PC-3 (cell line): ENCODE measurements at regions of chr9 and their contacts with region 1.

Region 1: GRCh38 chr9:25350011-25350410 is 328.2 kb downstream of the TUSC1 start:
- DNase-seq: peak; percentile 31
- ATAC-seq: no peak
- H3K4me3 ChIP-seq: no peak overlapping the region
- H3K27ac ChIP-seq: no peak overlapping the region
- H3K4me1 ChIP-seq: no peaks in the 10 kb centered on the region
- H3K27me3 ChIP-seq: no peaks in the 10 kb centered on the region
- CTCF ChIP-seq: peak; percentile 56

Region 2: DNA sequence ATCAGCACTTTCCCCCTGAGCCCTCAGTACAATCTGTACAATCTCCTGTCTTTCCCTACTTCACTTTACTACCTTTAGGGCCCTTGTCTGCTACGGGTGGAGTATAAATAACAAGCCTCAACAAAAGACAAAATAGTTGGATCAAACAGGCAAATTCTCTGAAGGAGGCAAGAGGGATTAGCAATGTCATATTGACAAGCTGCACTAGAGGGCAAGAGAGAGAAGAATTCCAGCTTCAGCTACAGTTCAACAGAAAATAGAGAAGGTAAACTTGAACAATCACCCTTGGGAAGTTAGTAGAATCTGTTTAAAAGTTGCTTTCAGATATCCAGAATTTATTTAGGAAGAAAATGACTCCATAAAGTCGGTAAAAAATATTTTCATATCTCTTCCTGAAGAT is 735.9 kb before region 1 on chr9:
- CTCF ChIA-PET with region 1: no interaction called
- POLR2A ChIA-PET with region 1: no interaction called
- intact Hi-C with region 1: loop called (anchors 5 kb)
- DNase-seq: peak; percentile 6
- ATAC-seq: peak; percentile 50; the same call in 1 of the 2 replicates
- H3K4me3 ChIP-seq: no peak overlapping the region
- H3K27ac ChIP-seq: no peak overlapping the region
- H3K4me1 ChIP-seq: no peaks in the 10 kb centered on the region
- H3K27me3 ChIP-seq: no peaks in the 10 kb centered on the region
- CTCF ChIP-seq: peak; percentile 41

Region 3: GRCh38 chr9:24841993-24842392 is 508.0 kb before region 1 on chr9:
- CTCF ChIA-PET with region 1: no interaction called
- POLR2A ChIA-PET with region 1: no interaction called
- intact Hi-C with region 1: loop called (anchors 5 kb)
- DNase-seq: no peak
- ATAC-seq: no peak
- H3K4me3 ChIP-seq: no peak overlapping the region
- H3K27ac ChIP-seq: no peak overlapping the region
- H3K4me1 ChIP-seq: no peaks in the 10 kb centered on the region
- H3K27me3 ChIP-seq: no peaks in the 10 kb centered on the region
- CTCF ChIP-seq: no peak